ENCODE measurements at regions of chr3 and their contacts with region 1.

Region 1: GRCh38 chr3:33547101-33547500 is 106.9 kb upstream of the UBP1 start:
- DNase-seq: no peak
- ATAC-seq: no peak
- H3K4me3 ChIP-seq: no peak overlapping the region
- H3K4me3 Mint-ChIP-seq: no peak overlapping the region
- H3K27ac ChIP-seq: no peak overlapping the region
- H3K27ac Mint-ChIP-seq: no peak overlapping the region
- H3K4me1 ChIP-seq: no peaks in the 10 kb centered on the region
- H3K4me1 Mint-ChIP-seq: no peaks in the 10 kb centered on the region
- H3K27me3 ChIP-seq: no peaks in the 10 kb centered on the region
- H3K27me3 Mint-ChIP-seq: no peaks in the 10 kb centered on the region

Region 2: DNA sequence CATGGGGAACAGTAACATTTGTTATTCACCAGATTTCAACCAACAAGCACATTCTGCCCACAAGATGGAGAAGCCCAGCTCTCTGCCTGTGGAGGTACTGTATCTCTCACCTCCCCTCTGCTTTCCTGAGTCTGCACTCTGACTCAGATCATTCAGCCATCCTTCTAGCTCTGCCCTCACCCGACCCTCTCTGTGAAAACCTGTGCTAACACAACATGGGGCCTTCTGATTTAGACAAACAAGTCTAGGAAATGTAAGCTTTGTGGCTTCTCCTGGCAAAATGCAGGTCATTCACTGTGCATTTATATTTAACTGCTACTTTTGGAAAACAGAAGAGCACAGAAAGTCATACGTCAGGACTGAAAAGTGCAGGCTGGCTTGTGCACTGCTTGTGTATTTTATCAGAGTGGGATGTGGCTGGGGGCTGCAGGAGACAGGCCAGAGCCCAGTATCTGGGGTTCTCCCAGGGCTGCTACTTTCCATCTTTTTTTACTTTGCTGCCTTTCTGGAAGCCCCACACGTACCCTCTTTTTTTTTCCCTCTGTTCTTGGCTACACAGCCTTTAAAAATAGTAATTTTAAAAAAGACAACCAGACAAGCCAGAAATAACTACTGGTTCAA is 379.3 kb before region 1 on chr3:
- CTCF ChIA-PET with region 1: no interaction called
- POLR2A ChIA-PET with region 1: no interaction called
- DNase-seq: no peak
- ATAC-seq: no peak
- H3K4me3 ChIP-seq: no peak overlapping the region
- H3K4me3 Mint-ChIP-seq: no peak overlapping the region
- H3K27ac ChIP-seq: no peak overlapping the region
- H3K27ac Mint-ChIP-seq: no peak overlapping the region
- H3K4me1 ChIP-seq: no peaks in the 10 kb centered on the region
- H3K4me1 Mint-ChIP-seq: peaks cover 7 to 9% (median 8%) of the 10 kb centered on the region in 3 donors
- H3K27me3 ChIP-seq: no peaks in the 10 kb centered on the region
- H3K27me3 Mint-ChIP-seq: peaks cover 0 to 2% of the 10 kb centered on the region in 2 donors

Region 3: GRCh38 chr3:33456756-33457155 is 90.3 kb before region 1 on chr3:
- CTCF ChIA-PET with region 1: no interaction called
- POLR2A ChIA-PET with region 1: interaction called in 1 of 2 experiments, 12 read pairs
- DNase-seq: no peak
- ATAC-seq: no peak
- H3K4me3 ChIP-seq: no peak overlapping the region
- H3K4me3 Mint-ChIP-seq: no peak overlapping the region
- H3K27ac ChIP-seq: no peak overlapping the region
- H3K27ac Mint-ChIP-seq: no peak overlapping the region
- H3K4me1 ChIP-seq: no peaks in the 10 kb centered on the region
- H3K4me1 Mint-ChIP-seq: peaks cover 3 to 7% (median 3%) of the 10 kb centered on the region in 3 donors
- H3K27me3 ChIP-seq: no peaks in the 10 kb centered on the region
- H3K27me3 Mint-ChIP-seq: no peaks in the 10 kb centered on the region

Region 4: DNA sequence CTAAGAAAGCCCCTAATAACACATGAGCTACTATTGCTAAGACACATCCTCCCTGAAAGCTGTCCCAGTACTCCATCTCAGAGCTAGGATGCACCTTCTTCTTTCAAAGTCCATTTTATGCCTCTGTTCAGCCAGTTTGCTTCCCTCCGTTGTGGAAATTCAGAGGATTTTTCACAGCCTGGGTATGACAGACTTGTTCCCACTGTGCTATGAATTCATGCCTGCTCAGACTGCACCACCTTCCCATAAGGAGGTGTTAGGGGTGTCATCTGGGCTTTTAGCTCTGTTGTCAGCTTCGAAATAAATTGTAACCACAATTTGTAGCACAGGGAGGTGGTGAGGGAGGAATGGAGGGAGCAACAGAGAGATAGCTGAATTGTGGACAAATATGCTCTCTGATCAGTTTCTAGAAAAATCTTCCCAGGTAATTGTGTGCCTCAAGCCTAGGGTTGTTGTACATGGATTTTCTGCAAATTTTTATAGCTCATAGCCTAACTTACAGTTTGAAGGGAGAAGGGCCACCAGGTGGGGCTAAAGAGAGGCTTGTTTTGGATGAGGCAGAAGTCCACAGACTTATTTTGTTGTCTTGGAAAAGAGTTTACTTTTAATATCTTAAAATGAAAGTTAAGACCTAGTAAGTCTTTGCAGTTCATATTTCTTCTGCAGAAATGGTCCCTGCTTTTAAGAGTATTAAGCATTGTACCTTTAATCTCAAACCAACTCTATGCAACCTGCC is 713.3 kb after region 1 on chr3:
- CTCF ChIA-PET with region 1: no interaction called
- POLR2A ChIA-PET with region 1: no interaction called
- DNase-seq: peak in 4 of 35 experiments; percentile 1 to 19 (median 5)
- ATAC-seq: no peak
- H3K4me3 ChIP-seq: no peak overlapping the region
- H3K4me3 Mint-ChIP-seq: no peak overlapping the region
- H3K27ac ChIP-seq: no peak overlapping the region
- H3K27ac Mint-ChIP-seq: no peak overlapping the region
- H3K4me1 ChIP-seq: no peaks in the 10 kb centered on the region
- H3K4me1 Mint-ChIP-seq: no peaks in the 10 kb centered on the region
- H3K27me3 ChIP-seq: no peaks in the 10 kb centered on the region
- H3K27me3 Mint-ChIP-seq: peaks cover 0 to 2% of the 10 kb centered on the region in 2 donors